H1 (cell line): ENCODE measurements at regions of chr1 and their contacts with region 1.

Region 1: DNA sequence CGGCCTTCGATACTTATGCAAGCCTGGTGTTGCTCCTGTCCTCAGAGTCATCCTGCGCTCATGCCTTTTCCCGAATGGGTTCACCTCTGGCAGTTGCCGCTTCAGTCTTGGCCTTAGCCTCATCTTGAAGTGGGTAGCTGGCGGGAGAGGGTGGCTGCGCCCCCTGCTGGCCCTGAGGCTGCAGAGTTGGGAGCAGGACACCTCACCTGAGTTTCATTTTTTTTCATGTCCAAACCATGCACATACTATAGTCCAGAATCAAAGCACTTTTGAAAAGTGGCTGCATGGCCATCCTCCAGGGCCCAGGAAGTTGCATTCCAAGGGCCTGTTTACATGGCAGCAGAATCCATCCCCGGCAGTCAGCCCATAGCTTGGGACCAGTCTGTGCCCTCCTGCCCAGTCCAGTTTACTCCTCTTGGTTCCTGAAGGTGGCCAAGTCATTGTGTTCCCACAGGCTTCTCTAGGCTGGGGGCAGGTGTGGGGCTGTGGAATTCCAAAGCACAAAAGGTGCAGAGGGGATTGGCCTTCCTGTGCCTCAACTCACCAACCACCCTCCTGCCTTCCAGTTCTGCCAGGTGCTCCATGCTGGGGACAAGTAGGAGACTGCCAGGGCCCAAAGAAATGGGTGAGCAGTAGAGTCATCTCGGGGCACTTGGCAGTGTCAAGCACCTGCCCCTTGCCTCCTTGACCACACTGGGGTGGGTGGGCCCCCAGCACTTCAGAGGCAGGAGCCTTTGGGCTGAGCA is 44.0 kb downstream of the YARS1 start:
- DNase-seq: peak; percentile 74 to 92
- H3K4me3 ChIP-seq: no peak overlapping the region
- H3K27ac ChIP-seq: no peak overlapping the region
- H3K4me1 ChIP-seq: peaks cover 0 to 22% (median 9%) of the 10 kb centered on the region in 4 experiments; a peak in 6 of 7 replicates
- H3K27me3 ChIP-seq: no peaks in the 10 kb centered on the region
- CTCF ChIP-seq: peak; percentile 93 to 96 (median 95)
- EP300 ChIP-seq: no peak
- POLR2A ChIP-seq: 0 out of 3 replicates have a peak, but pooled peaks of 1 of the 2 experiments have one; percentile 57
- RAD21 ChIP-seq: peak; percentile 93 to 94

Region 2: GRCh38 chr1:32400876-32401631 is 372.1 kb before region 1 on chr1:
- CTCF ChIA-PET with region 1: interaction called, 24 read pairs
- POLR2A ChIA-PET with region 1: no interaction called
- DNase-seq: peak in 1 of 2 experiments; percentile 91
- H3K4me3 ChIP-seq: no peak overlapping the region
- H3K27ac ChIP-seq: no peak overlapping the region
- H3K4me1 ChIP-seq: no peaks in the 10 kb centered on the region; a peak in 1 of 7 replicates
- H3K27me3 ChIP-seq: no peaks in the 10 kb centered on the region
- CTCF ChIP-seq: peak; percentile 79 to 93 (median 88)
- EP300 ChIP-seq: peak in 1 of 2 experiments; percentile 24; a peak in 1 of 3 replicates
- POLR2A ChIP-seq: no peak
- RAD21 ChIP-seq: peak; percentile 96 to 99

Region 3: GRCh38 chr1:32684167-32684811 is 88.9 kb before region 1 on chr1:
- CTCF ChIA-PET with region 1: interaction called, 13 read pairs
- POLR2A ChIA-PET with region 1: interaction called, 10 read pairs
- DNase-seq: no peak
- H3K4me3 ChIP-seq: no peak overlapping the region
- H3K27ac ChIP-seq: no peak overlapping the region
- H3K4me1 ChIP-seq: no peaks in the 10 kb centered on the region
- H3K27me3 ChIP-seq: no peaks in the 10 kb centered on the region
- CTCF ChIP-seq: no peak
- EP300 ChIP-seq: no peak
- POLR2A ChIP-seq: no peak
- RAD21 ChIP-seq: no peak

Region 4: GRCh38 chr1:32716312-32717148 is 56.7 kb before region 1 on chr1:
- CTCF ChIA-PET with region 1: interaction called, 329 read pairs
- POLR2A ChIA-PET with region 1: interaction called, 152 read pairs
- DNase-seq: peak; percentile 91 to 98
- H3K4me3 ChIP-seq: peak overlapping the region in 3 of 4 experiments; percentile 9 to 28 (median 20); a peak in 4 of 8 replicates
- H3K27ac ChIP-seq: peak overlapping the region; percentile 0; the same call in 1 of the 2 replicates
- H3K4me1 ChIP-seq: peaks cover 0 to 13% (median 13%) of the 10 kb centered on the region in 4 experiments; a peak in 6 of 7 replicates
- H3K27me3 ChIP-seq: no peaks in the 10 kb centered on the region; a peak in 1 of 7 replicates
- CTCF ChIP-seq: no peak
- EP300 ChIP-seq: peak in 1 of 2 experiments; percentile 58; a peak in 1 of 3 replicates
- POLR2A ChIP-seq: peak in 1 of 2 experiments; percentile 39; a peak in 1 of 3 replicates
- RAD21 ChIP-seq: no peak; a peak in 1 of 4 replicates

Region 5: GRCh38 chr1:32741413-32742198 is 31.6 kb before region 1 on chr1:
- CTCF ChIA-PET with region 1: interaction called, 26 read pairs
- POLR2A ChIA-PET with region 1: interaction called, 36 read pairs
- DNase-seq: peak in 1 of 2 experiments; percentile 71
- H3K4me3 ChIP-seq: peak overlapping the region; percentile 56 to 94 (median 66)
- H3K27ac ChIP-seq: no peak overlapping the region
- H3K4me1 ChIP-seq: peaks cover 9 to 32% (median 28%) of the 10 kb centered on the region in 4 experiments
- H3K27me3 ChIP-seq: peaks cover 0 to 12% (median 4%) of the 10 kb centered on the region in 4 experiments; a peak in 4 of 7 replicates
- CTCF ChIP-seq: peak; percentile 16 to 38 (median 20)
- EP300 ChIP-seq: no peak
- POLR2A ChIP-seq: no peak
- RAD21 ChIP-seq: no peak; a peak in 1 of 4 replicates

Region 6: GRCh38 chr1:32786856-32787255 is 13.7 kb after region 1 on chr1:
- CTCF ChIA-PET with region 1: interaction called, 17 read pairs
- POLR2A ChIA-PET with region 1: interaction called, 40 read pairs
- DNase-seq: no peak
- H3K4me3 ChIP-seq: no peak overlapping the region
- H3K27ac ChIP-seq: no peak overlapping the region
- H3K4me1 ChIP-seq: no peaks in the 10 kb centered on the region
- H3K27me3 ChIP-seq: no peaks in the 10 kb centered on the region
- CTCF ChIP-seq: no peak; a peak in 1 of 4 replicates
- EP300 ChIP-seq: no peak
- POLR2A ChIP-seq: no peak
- RAD21 ChIP-seq: no peak; a peak in 1 of 4 replicates

Region 7: GRCh38 chr1:32870615-32871363 is 97.6 kb after region 1 on chr1 and contains the start of gene FNDC5:
- CTCF ChIA-PET with region 1: interaction called, 3 read pairs
- POLR2A ChIA-PET with region 1: interaction called, 10 read pairs
- DNase-seq: no peak
- H3K4me3 ChIP-seq: peak within 1 kb of the TSS; percentile 28 to 65 (median 37)
- H3K27ac ChIP-seq: no peak within 1 kb of the TSS
- H3K4me1 ChIP-seq: peaks cover 6 to 27% (median 21%) of the 10 kb centered on the region in 4 experiments
- H3K27me3 ChIP-seq: peaks cover 6 to 35% (median 28%) of the 10 kb centered on the region in 4 experiments
- CTCF ChIP-seq: no peak
- EP300 ChIP-seq: no peak
- POLR2A ChIP-seq: no peak
- RAD21 ChIP-seq: no peak
- total RNA-seq, gene FNDC5: 0.94 and 2.0 TPM in 2 replicates